Activated CD4-positive, alpha-beta T cell treated with anti-CD3 and anti-CD28 coated beads for 36 hours (primary cell): ENCODE measurements at regions of chr13 and their contacts with region 1.

Region 1: DNA sequence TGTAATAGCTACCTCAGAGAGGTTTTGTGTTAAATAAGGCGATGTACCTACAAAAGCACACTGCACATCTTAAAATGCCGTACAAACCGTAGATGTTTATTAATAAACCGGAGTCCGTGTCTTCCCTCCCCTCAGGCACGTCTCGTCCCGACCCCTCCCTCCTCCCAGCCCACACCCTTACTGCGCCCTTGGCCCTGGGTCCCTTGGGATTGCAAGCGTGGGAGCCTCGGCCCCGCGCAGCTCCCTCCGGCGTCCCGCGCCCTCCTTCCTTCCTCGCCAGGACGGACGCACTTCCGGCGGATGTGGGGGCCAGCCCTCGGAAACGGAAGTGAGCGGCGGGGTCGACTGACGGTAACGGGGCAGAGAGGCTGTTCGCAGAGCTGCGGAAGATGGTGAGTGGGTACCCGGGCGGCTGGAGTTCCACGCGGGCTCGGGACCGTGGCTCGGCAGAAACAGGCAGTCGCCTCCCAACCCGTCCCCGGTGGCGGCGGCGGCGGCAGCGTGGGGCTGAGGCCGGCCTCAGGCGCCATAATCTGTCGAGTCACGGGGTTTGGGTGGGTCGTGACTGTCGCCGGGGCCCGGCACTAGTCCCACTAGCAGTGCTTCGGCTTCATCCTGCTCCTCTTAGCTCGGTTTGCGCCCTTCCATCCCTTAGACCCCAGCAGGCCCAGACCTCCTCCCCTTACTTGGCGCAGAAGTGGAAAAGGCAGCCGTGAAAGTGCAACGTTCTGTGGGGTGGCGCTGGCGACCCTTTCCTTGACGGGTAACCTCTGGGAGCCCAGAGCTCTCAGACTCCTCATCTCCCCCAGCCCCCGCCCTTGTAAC is at the start of gene POMP:
- DNase-seq: peak; percentile 95
- ATAC-seq: peak; percentile 88
- H3K4me3 Mint-ChIP-seq: peak within 1 kb of the TSS; percentile 99
- H3K27ac Mint-ChIP-seq: peak within 1 kb of the TSS; percentile 98
- H3K4me1 Mint-ChIP-seq: peaks cover 59% of the 10 kb centered on the region
- H3K27me3 Mint-ChIP-seq: no peaks in the 10 kb centered on the region
- total RNA-seq, gene POMP: 107 to 132 TPM

Region 2: GRCh38 chr13:27424246-27425157 is 1234.5 kb before region 1 on chr13 and contains the start of gene GTF3A:
- CTCF ChIA-PET with region 1: no interaction called
- POLR2A ChIA-PET with region 1: no interaction called
- intact Hi-C with region 1: loop called in 1 of 2 experiments (anchors 10 kb)
- DNase-seq: peak; percentile 92
- ATAC-seq: peak; percentile 66
- H3K4me3 Mint-ChIP-seq: peak within 1 kb of the TSS; percentile 80
- H3K27ac Mint-ChIP-seq: peak within 1 kb of the TSS; percentile 97
- H3K4me1 Mint-ChIP-seq: peaks cover 45% of the 10 kb centered on the region
- H3K27me3 Mint-ChIP-seq: no peaks in the 10 kb centered on the region
- total RNA-seq, gene GTF3A: 177 to 208 TPM

Region 3: GRCh38 chr13:28324181-28324789 is 334.7 kb before region 1 on chr13:
- CTCF ChIA-PET with region 1: interaction called, 4 read pairs
- POLR2A ChIA-PET with region 1: no interaction called
- intact Hi-C with region 1: loop called (anchors 1 kb)
- DNase-seq: peak; percentile 74
- ATAC-seq: peak; percentile 78
- H3K4me3 Mint-ChIP-seq: no peak overlapping the region
- H3K27ac Mint-ChIP-seq: no peak overlapping the region
- H3K4me1 Mint-ChIP-seq: peaks cover 3% of the 10 kb centered on the region
- H3K27me3 Mint-ChIP-seq: no peaks in the 10 kb centered on the region

Region 4: DNA sequence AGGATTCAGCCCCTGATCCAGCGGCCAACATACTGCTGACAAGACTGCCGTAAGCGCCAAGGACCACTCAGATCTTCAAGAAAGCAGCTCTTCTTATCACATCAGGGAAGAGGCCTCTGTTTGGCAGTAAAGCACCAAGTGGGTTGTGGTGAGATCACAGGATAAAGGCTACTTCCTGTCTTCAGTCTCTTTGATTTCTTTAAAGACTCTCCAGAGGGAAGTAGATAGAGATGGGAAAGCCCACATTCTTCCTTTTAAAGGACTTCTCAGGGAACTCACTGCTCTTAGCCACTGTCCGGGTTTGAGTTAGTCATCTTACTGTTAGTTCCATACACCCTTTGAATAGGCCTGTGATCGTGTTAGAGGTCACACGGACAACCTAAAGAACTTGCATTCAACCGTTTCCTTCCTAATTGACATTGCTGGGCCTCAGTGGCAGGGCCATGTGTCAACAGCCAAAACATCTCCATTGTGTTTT is 47.3 kb before region 1 on chr13:
- CTCF ChIA-PET with region 1: no interaction called
- POLR2A ChIA-PET with region 1: interaction called, 3 read pairs
- intact Hi-C with region 1: loop called in 1 of 2 experiments (anchors 2 kb)
- DNase-seq: peak; percentile 24
- ATAC-seq: peak; percentile 69
- H3K4me3 Mint-ChIP-seq: no peak overlapping the region
- H3K27ac Mint-ChIP-seq: peak overlapping the region; percentile 82
- H3K4me1 Mint-ChIP-seq: peaks cover 35% of the 10 kb centered on the region
- H3K27me3 Mint-ChIP-seq: peaks cover 1% of the 10 kb centered on the region

Region 5: DNA sequence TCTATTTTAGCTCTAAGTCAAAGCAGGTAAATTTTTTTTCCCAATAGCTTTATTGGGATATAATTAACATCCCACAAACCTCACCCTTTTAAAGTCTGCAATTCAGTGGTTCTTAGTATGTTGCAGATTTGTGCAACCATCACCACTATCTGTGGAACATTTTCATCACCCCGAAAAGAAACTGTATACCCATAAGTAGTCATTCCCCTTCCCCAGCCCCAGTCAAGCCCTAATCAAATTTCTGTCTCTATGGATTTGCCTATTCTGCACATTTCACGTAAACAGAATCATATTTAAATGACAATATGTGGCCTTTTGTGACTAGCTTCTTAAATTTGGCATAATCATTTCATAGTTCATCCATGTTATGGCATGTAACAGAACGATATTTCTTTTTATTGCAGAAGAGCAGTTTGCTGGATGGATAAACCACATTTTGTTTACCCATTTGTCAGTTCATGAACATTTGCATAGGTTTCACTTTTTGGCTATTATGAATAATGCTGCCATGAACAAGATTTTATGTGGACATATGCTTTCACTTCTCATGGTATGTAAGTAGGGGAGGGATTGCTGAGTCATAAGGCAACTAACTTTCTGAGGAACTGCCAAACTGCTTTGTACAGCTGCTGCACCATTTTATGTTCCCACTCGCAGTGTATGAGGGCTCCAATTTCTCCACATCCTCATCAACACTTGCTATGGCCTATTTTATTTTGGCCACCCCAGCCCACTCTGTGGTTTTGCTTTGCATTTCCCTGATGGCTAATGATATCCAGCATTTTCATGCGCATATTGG is 48.8 kb after region 1 on chr13:
- CTCF ChIA-PET with region 1: no interaction called
- POLR2A ChIA-PET with region 1: no interaction called
- intact Hi-C with region 1: loop called in 1 of 2 experiments (anchors 2 kb)
- DNase-seq: peak; percentile 25
- ATAC-seq: peak; percentile 94
- H3K4me3 Mint-ChIP-seq: no peak overlapping the region
- H3K27ac Mint-ChIP-seq: no peak overlapping the region
- H3K4me1 Mint-ChIP-seq: peaks cover 11% of the 10 kb centered on the region
- H3K27me3 Mint-ChIP-seq: no peaks in the 10 kb centered on the region

Region 6: DNA sequence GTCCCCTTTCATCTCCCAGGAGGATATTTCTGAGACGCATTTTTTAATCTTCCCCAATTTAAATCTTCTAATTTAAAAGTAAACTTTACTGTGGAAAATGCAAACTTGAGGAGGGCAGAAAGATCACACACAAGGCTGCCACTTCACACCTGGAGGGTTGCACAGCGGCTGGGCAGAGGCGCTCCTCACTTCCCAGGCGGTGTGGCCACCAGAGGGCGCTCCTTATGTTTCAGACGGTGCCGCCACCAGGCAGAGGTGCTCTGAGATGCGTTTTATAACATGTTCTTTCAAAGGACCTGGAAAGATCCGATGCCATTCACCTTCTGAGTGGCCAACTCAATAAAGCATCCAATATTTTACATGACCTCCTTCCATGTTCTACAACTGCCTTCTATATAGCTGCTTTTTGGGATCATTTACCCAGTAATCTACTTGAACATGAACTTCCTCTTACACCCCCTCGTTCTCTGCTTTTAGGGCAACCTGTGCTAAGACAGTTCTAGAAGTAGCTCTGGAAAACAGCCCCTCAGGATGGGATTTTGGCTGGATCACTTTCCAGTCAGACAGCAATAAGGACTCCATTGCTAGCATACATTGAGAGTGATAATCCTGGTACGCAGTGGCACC is 146.3 kb after region 1 on chr13:
- CTCF ChIA-PET with region 1: no interaction called
- POLR2A ChIA-PET with region 1: no interaction called
- intact Hi-C with region 1: no loop called
- DNase-seq: peak; percentile 78
- ATAC-seq: no peak
- H3K4me3 Mint-ChIP-seq: no peak overlapping the region
- H3K27ac Mint-ChIP-seq: no peak overlapping the region
- H3K4me1 Mint-ChIP-seq: no peaks in the 10 kb centered on the region
- H3K27me3 Mint-ChIP-seq: peaks cover 11% of the 10 kb centered on the region

Region 7: GRCh38 chr13:29595380-29596063 is 936.5 kb after region 1 on chr13 and contains the start of gene SLC7A1:
- CTCF ChIA-PET with region 1: no interaction called
- POLR2A ChIA-PET with region 1: no interaction called
- intact Hi-C with region 1: loop called in 1 of 2 experiments (anchors 2 kb)
- DNase-seq: peak; percentile 92
- ATAC-seq: peak; percentile 88
- H3K4me3 Mint-ChIP-seq: peak within 1 kb of the TSS; percentile 90
- H3K27ac Mint-ChIP-seq: peak within 1 kb of the TSS; percentile 95
- H3K4me1 Mint-ChIP-seq: peaks cover 36% of the 10 kb centered on the region
- H3K27me3 Mint-ChIP-seq: no peaks in the 10 kb centered on the region
- total RNA-seq, gene SLC7A1: 91.1 to 126 TPM